Gastrocnemius medialis (tissue), 4 donors: ENCODE measurements at regions of chr6 and their contacts with region 1.

Region 1: GRCh38 chr6:32763427-32763826 is at the start of gene HLA-DQB2:
- DNase-seq: no peak
- ATAC-seq: no peak
- H3K4me3 ChIP-seq: no peak within 1 kb of the TSS
- H3K27ac ChIP-seq: no peak within 1 kb of the TSS
- H3K4me1 ChIP-seq: no peaks in the 10 kb centered on the region
- H3K27me3 ChIP-seq: peaks cover 3 to 8% (median 8%) of the 10 kb centered on the region in 3 donors
- CTCF ChIP-seq: no peak
- POLR2A ChIP-seq: no peak
- total RNA-seq, gene HLA-DQB2: 0.66 to 0.78 TPM in 2 of 4 donors, not detected in the others

Region 2: DNA sequence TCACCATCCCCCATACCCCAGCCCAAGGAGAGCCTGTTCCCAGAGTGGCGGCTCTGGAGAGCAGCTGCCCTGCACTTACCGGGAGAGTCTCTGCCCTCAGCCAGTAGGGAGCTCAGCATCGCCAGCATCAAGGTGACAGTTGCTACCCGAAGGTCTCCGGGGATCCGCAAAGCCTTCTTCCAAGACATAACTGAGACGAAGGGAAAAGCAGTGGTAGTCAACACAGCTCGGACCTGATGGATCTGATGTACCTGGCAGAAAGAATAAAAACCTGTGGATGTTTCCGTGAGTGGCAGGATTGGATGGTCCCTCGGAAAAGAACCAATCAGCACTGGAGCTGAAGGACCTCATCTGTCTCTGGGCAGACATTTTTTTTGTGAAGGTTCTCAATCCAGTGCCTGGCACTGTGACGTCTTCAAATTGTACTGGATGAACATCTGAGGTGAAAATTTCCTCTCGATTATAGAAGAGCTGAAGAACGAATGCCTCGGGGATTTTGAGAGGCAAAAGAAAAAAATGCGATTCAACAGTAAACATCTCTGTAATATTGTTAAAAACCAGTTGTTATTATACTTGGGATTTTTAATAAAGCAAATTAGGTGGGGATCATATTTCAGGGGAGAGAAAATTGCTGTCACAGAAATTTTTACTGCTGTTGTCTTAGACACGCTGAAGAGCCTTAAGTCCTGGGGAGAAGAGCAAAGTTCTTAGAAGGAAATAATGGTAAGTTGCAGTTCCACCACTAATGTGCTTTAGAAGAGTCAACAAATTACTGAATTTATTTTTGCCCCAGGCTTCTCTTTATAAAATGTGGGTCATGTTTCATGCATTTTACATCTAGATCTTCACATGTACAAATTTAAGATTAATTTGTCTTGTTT is 96.8 kb before region 1 on chr6 and contains the start of gene HLA-DQB1:
- in situ Hi-C with region 1: loop called in 2 of 4 experiments (anchors 5 kb)
- intact Hi-C with region 1: loop called (anchors 2 kb)
- DNase-seq: no peak
- ATAC-seq: peak; percentile 83 to 86
- H3K4me3 ChIP-seq: peak within 1 kb of the TSS in 1 of 4 donors; percentile 11
- H3K27ac ChIP-seq: peak within 1 kb of the TSS in 2 of 4 donors; percentile 36 to 54
- H3K4me1 ChIP-seq: no peaks in the 10 kb centered on the region
- H3K27me3 ChIP-seq: no peaks in the 10 kb centered on the region
- CTCF ChIP-seq: no peak
- POLR2A ChIP-seq: no peak
- total RNA-seq, gene HLA-DQB1: 0.22 to 2.2 (median 0.91) TPM

Region 3: GRCh38 chr6:32816746-32817204 is 53.3 kb after region 1 on chr6 and contains the start of gene HLA-DOB:
- in situ Hi-C with region 1: no loop called
- intact Hi-C with region 1: no loop called
- DNase-seq: no peak
- ATAC-seq: peak in 1 of 2 donors; percentile 84
- H3K4me3 ChIP-seq: peak within 1 kb of the TSS in 1 of 4 donors; percentile 19
- H3K27ac ChIP-seq: no peak within 1 kb of the TSS
- H3K4me1 ChIP-seq: peaks cover 0 to 8% of the 10 kb centered on the region in 2 donors
- H3K27me3 ChIP-seq: no peaks in the 10 kb centered on the region
- CTCF ChIP-seq: no peak
- POLR2A ChIP-seq: no peak
- total RNA-seq, gene HLA-DOB: 0.22 to 0.72 (median 0.36) TPM in 3 of 4 donors, not detected in the other

Region 4: DNA sequence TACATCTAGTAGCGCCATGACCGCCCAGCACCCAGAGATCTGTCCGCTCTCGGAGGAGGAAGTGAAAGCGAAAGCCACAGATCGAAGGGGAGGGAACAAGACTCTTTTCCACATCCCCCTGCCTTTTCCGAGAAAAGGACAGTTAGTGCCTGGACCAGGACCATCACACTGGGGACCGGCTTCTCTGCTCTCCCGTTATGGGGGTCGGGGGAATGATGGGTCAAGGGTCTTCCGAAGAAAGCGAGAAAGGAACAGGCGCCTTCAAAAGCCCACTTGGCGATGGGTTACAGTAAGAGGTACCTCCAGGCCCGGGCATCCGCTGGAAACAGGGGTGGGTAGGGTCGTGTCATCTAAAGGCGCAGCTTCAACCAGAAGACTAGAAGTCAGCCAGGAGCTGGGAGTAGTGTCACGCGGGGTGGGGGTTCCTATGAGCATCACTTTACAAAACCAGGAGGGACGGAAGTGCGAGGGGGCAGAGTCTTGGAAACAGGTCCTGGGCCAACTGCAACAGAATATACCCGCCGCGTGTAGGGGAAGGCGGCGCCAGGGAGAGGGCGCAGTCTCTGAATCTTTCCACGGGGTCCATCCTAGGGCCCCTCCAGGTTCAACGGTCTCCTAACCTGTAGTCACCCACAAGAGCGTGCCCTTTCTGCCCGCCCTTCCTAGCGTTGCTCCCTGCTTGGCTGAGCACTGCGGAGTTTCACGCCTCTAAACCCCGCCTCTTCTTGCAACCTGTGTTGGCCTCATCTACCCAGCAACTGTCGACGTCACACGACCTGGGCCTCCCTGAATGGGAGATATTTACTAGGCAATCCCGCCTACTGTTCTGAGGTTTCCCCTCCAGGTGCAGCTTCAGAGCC is 80.8 kb after region 1 on chr6 and contains the start of gene PSMB8:
- in situ Hi-C with region 1: no loop called
- intact Hi-C with region 1: no loop called
- DNase-seq: peak; percentile 91 to 95
- ATAC-seq: peak; percentile 99
- H3K4me3 ChIP-seq: peak within 1 kb of the TSS; percentile 66 to 91 (median 72)
- H3K27ac ChIP-seq: peak within 1 kb of the TSS; percentile 82 to 92 (median 91)
- H3K4me1 ChIP-seq: peaks cover 4 to 10% of the 10 kb centered on the region in 2 donors
- H3K27me3 ChIP-seq: no peaks in the 10 kb centered on the region
- CTCF ChIP-seq: peak in 3 of 5 experiments; percentile 27 to 51 (median 44)
- POLR2A ChIP-seq: peak; percentile 72 to 84
- total RNA-seq, gene PSMB8: 7.0 to 20.2 (median 9.2) TPM